Testis (tissue), 5 donors: ENCODE measurements at regions of chr9 and their contacts with region 1.

Region 1: GRCh38 chr9:107489687-107490605 is at the start of gene KLF4:
- DNase-seq: peak; percentile 96
- H3K4me3 ChIP-seq: peak within 1 kb of the TSS; percentile 78 to 91
- H3K27ac ChIP-seq: peak within 1 kb of the TSS; percentile 94
- H3K4me1 ChIP-seq: no peaks in the 10 kb centered on the region
- H3K27me3 ChIP-seq: no peaks in the 10 kb centered on the region
- CTCF ChIP-seq: no peak
- POLR2A ChIP-seq: peak; percentile 55
- total RNA-seq, gene KLF4: 61.1 to 84.8 TPM

Region 2: DNA sequence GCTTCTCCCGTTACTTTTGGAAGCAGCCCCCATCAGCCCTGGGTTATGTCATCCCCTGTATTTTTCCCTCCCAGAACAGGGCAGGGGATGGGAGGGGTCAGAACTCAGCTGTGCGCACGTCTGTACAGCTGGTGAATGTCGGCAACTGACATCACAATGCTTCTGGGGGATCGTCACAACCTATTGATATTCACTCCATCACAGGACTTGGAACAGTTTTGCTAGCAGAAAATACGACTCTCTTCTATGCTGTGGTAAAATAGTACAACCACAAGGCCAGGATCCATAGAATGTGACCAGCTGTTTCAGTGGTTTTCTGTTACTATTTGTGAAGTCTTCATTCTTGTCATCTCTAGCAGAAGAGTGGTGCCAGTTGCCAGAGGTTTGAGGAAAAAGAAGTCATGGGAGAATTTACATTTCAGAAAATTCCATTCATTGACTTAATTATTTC is 76.7 kb after region 1 on chr9:
- intact Hi-C with region 1: loop called (anchors 10 kb)
- DNase-seq: no peak
- H3K4me3 ChIP-seq: no peak overlapping the region
- H3K27ac ChIP-seq: no peak overlapping the region
- H3K4me1 ChIP-seq: no peaks in the 10 kb centered on the region
- H3K27me3 ChIP-seq: no peaks in the 10 kb centered on the region
- CTCF ChIP-seq: no peak
- POLR2A ChIP-seq: no peak

Region 3: DNA sequence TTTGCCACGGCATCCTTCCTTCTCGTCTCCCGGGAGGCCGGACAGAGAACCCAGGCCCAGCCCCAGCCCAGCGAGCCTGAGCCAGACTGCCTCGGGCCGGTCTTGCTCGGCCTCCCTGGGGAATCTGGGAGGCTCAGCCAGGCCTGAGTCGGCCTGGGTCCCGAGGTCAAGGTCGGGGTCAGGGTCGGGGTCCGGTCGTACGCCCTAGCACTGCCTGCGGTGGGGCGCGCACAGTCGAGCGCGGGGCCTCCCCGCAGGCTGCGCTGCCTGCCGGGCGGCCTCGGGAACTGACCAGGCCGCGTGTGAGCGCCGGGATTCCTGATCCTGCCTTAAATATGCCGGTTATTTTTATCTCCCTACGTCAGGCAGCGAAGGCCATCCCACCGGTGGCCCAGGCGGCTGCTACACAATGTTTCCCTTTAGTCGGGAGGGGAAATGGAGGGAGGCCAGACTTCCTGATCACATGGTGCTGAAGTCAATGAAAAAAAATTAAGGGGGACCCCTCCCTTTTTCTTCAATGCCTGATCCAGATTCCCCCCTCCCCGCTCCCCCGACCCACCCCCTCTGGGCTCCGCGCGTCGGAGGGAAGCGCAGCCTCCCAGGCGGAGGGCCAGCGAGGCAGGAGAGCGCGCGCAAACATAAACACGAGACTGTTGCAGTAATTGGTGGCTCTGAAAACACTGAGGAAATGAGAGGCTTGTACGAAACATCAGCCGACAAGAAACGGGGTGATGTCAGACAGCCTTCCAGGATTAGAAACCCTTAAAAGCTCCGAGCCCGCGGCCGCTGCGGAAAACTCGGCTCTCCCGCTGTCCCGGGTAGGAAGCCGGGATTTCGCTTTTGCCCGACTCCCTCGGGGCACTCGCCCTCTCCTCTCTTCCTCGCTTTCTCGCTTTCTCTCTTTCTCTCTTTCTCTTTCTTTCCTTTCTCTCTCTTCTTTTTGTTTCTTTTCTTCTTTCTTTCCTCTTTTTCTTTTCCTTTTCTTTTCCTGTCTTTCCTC is 147.8 kb after region 1 on chr9:
- intact Hi-C with region 1: loop called (anchors 10 kb)
- DNase-seq: peak; percentile 95
- H3K4me3 ChIP-seq: peak overlapping the region; percentile 52 to 57
- H3K27ac ChIP-seq: peak overlapping the region; percentile 90 to 97
- H3K4me1 ChIP-seq: peaks cover 16% of the 10 kb centered on the region
- H3K27me3 ChIP-seq: no peaks in the 10 kb centered on the region
- CTCF ChIP-seq: peak; percentile 14 to 52 (median 20)
- POLR2A ChIP-seq: peak; percentile 87